GM10248 (cell line): ENCODE measurements at regions of chr12 and their contacts with region 1.

Region 1: DNA sequence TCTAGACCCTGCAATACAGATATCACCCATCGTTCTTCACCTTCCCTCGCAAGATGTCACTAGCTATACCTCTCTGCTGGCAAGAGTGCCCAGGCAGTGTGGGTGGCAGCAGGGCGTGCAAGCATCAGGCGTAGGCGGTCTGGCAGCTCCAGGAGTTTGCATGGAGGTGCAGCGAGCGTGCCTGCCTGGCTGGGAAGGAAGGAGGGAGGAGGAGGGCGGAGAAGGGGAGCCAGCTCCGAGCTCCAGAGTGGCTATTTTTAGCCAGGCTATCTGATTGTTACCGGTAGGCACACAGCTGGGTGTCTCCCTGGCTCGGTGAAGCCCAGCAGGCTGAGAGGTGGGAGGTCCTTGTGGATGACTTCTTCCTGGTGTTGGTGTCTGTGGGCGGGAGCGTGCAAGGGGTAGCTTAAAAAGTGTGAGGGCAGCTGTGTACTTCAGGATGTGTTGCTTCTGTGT is 6.2 kb downstream of the FOXJ2 start:
- DNase-seq: no peak
- CTCF ChIP-seq: no peak

Region 2: GRCh38 chr12:7994731-7995205 is 43.9 kb before region 1 on chr12:
- CTCF ChIA-PET with region 1: no interaction called
- POLR2A ChIA-PET with region 1: no interaction called
- DNase-seq: no peak
- CTCF ChIP-seq: no peak

Region 3: DNA sequence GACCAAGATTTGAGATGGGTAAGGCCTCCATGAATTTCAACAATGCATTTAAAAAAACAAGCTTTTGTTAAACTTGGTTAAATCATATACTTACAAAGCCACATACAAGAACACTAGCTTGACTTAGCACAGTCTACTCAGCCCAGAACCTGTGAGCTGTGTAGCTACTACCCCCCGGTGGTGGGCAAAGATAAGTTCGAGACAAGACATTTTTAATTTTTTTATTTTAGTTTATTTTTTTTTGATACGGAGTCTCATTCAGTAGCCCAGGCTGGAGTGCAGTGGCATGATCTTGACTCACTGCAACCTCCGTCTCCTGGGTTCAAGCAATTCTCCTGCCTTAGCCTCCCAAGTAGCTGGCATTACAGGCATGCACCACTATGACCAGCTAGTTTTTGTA is 39.7 kb after region 1 on chr12:
- CTCF ChIA-PET with region 1: interaction called, 34 read pairs
- POLR2A ChIA-PET with region 1: no interaction called
- DNase-seq: peak; percentile 32
- CTCF ChIP-seq: peak; percentile 26

Region 4: DNA sequence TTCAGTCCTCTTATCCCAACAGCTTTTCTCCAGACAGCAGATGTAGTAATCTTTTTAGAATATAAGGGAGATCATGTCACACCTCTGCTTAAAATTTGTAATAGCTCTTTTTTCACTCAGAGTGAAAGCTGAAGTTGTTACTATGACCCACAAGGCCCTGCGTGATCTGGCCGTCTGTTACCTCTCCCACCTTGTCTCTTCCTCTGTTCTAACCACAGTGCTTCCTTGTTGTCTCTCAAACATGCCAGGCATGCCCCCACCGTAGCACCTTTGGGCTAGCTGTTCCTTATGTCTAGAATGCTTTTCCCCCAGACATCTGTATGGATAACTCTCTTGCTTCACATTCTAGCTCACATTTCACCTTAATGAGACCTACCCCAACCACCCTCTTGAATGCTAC is 49.9 kb after region 1 on chr12:
- CTCF ChIA-PET with region 1: no interaction called
- POLR2A ChIA-PET with region 1: no interaction called
- DNase-seq: peak; percentile 44
- CTCF ChIP-seq: no peak